Activated CD4-positive, alpha-beta T cell treated with anti-CD3 and anti-CD28 coated beads for 36 hours (primary cell): ENCODE measurements at regions of chr6 and their contacts with region 1.

Region 1: GRCh38 chr6:157184202-157185020 is 138.9 kb downstream of the TMEM242 start:
- DNase-seq: peak; percentile 76
- ATAC-seq: peak; percentile 83
- H3K4me3 Mint-ChIP-seq: no peak overlapping the region
- H3K27ac Mint-ChIP-seq: peak overlapping the region; percentile 58
- H3K4me1 Mint-ChIP-seq: peaks cover 11% of the 10 kb centered on the region
- H3K27me3 Mint-ChIP-seq: no peaks in the 10 kb centered on the region

Region 2: GRCh38 chr6:156564127-156564806 is 620.1 kb before region 1 on chr6:
- CTCF ChIA-PET with region 1: no interaction called
- POLR2A ChIA-PET with region 1: no interaction called
- intact Hi-C with region 1: loop called (anchors 1 to 2 kb)
- DNase-seq: peak; percentile 89
- ATAC-seq: peak; percentile 98
- H3K4me3 Mint-ChIP-seq: no peak overlapping the region
- H3K27ac Mint-ChIP-seq: no peak overlapping the region
- H3K4me1 Mint-ChIP-seq: peaks cover 7% of the 10 kb centered on the region
- H3K27me3 Mint-ChIP-seq: peaks cover 3% of the 10 kb centered on the region

Region 3: DNA sequence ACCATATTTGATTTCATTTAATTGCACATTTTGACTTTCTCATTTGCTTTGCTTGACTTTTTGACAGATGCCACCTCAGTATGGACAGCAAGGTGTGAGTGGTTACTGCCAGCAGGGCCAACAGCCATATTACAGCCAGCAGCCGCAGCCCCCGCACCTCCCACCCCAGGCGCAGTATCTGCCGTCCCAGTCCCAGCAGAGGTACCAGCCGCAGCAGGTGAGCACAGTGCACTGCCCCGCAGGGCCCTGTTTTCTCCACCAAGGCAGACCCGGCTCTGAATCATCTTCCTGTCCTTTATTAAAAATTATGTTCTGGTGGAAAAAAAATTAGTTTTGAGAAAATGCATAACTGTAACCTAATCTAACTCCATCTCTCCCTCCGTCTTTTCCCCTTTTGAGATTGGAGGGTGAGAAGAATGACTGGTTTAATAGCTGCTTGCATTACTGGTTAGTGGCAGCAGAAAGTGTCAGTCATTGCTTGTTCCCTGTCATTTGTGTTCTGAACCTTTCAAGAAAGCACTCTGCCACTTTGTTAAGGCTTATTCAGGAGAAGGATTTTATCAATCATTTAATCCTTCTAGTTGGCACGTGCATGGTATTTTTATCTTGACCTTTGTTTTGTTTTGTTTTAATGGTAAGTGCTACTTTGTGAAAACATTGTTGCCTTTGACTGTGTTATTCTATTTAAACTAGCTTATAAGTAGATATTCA is 282.9 kb before region 1 on chr6:
- CTCF ChIA-PET with region 1: no interaction called
- POLR2A ChIA-PET with region 1: no interaction called
- intact Hi-C with region 1: loop called in 1 of 2 experiments (anchors 10 kb)
- DNase-seq: no peak
- ATAC-seq: no peak
- H3K4me3 Mint-ChIP-seq: no peak overlapping the region
- H3K27ac Mint-ChIP-seq: no peak overlapping the region
- H3K4me1 Mint-ChIP-seq: peaks cover 48% of the 10 kb centered on the region
- H3K27me3 Mint-ChIP-seq: no peaks in the 10 kb centered on the region

Region 4: DNA sequence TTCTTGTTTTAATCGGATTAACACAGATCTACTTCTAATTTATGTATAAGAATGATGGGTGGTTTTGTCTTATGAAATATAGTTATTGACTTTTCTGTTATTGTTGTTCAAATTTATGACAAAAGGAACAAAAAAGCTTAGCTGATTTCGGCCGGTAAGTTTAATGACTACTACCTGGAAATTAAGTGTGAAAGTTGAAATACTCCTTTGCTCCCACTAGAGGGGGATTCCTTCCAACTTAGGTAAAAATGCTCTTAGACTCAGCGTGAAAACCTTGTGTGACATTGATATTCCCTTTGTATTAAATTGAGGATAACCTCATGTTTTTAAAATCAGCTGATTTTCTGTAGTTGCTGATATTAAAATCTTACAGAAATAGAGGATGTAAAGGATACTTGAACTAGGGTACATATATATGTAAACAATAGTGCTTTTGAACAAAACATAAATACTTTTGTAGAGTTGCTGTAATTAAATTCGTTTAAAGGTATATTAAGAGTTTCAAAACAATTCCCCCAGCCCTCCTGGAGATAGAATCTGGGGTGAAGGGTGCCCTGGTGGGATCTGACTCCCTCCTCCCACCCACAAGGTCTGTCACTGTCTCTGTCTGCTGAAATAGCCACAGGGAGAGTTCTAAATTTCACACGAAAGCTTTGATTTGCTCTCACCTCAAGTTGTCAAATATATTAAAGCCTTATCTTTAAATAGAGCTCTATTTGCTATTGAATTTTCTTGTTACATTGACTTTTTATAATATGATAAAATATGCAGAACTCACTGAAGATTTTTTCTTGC is 149.8 kb before region 1 on chr6:
- CTCF ChIA-PET with region 1: interaction called, 10 read pairs
- POLR2A ChIA-PET with region 1: no interaction called
- intact Hi-C with region 1: loop called (anchors 1 kb)
- DNase-seq: no peak
- ATAC-seq: peak; percentile 59
- H3K4me3 Mint-ChIP-seq: peak overlapping the region; percentile 49
- H3K27ac Mint-ChIP-seq: peak overlapping the region; percentile 52
- H3K4me1 Mint-ChIP-seq: peaks cover 29% of the 10 kb centered on the region
- H3K27me3 Mint-ChIP-seq: no peaks in the 10 kb centered on the region

Region 5: DNA sequence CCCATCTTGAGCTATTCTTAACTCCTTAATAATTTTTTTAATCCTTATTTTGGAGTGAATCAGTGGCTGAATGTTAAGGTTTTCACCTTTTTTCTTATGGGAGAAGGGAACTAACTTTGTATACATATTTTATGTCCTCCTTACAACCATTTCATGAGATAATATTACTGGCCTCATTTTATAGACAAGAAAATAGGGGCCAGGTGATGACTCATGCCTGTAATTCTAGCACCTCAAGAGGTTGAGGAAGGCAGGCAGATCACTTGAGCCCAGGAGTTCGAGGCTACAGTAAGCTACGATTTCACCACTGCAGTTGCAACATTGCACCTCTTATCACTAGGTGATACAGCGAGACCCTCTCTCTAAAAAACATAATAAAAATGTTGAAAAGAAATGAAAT is 10.2 kb after region 1 on chr6:
- CTCF ChIA-PET with region 1: interaction called, 13 read pairs
- POLR2A ChIA-PET with region 1: no interaction called
- intact Hi-C with region 1: no loop called
- DNase-seq: no peak
- ATAC-seq: no peak
- H3K4me3 Mint-ChIP-seq: no peak overlapping the region
- H3K27ac Mint-ChIP-seq: no peak overlapping the region
- H3K4me1 Mint-ChIP-seq: peaks cover 16% of the 10 kb centered on the region
- H3K27me3 Mint-ChIP-seq: no peaks in the 10 kb centered on the region